Activated naive CD8-positive, alpha-beta T cell treated with anti-CD3 and anti-CD28 coated beads, Interleukin-2, amount 10 ng/mL, durations not matched to agents 7 days and 5 days (primary cell): ENCODE measurements at regions of chr19 and their contacts with region 1.

Region 1: DNA sequence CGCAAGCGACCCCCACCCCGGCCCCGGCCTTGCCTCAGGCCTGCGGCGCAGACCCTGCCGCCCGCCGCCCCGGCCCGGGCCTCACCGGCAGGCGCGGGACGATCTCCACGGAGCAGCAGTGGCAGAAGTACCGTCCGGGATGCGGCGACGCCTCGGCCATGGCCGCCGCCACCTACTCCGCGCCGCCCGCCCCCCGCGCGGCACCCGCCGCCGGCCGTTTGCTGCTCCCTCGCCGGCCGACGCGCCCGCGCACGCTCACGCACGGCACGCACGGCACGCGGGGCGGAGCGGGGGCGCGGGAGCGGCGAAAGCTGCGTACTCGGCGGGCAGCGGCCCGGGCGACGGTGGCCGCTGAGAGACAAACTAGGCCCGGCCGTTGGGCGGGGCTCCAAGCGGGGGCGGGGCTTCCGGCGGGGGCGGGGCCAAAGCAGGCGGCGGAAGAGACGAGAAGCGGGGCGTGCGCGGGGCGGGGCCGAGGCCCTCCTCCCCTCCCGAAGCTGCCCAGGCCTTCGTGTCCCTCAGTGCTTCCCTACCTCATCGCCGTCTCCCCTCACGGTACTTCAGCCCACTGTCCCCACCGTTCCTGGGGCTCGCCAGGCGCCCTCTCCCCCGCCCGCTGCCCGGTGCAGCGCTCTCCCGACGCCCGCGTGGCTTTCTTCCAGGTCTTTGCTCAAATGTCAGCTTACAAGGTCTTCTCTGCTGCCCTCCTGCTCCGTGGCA is at the start of gene RNF126:
- DNase-seq: peak; percentile 93
- ATAC-seq: peak; percentile 51
- H3K4me3 Mint-ChIP-seq: peak within 1 kb of the TSS; percentile 93
- H3K27ac Mint-ChIP-seq: peak within 1 kb of the TSS; percentile 95
- H3K4me1 Mint-ChIP-seq: peaks cover 23% of the 10 kb centered on the region
- H3K27me3 Mint-ChIP-seq: no peaks in the 10 kb centered on the region
- total RNA-seq, gene RNF126: 79.0 to 84.8 TPM

Region 2: GRCh38 chr19:633068-633785 is 29.9 kb before region 1 on chr19 and contains the start of gene POLRMT:
- POLR2A ChIA-PET with region 1: interaction called, 15 read pairs
- DNase-seq: peak; percentile 95
- ATAC-seq: peak; percentile 95
- H3K4me3 Mint-ChIP-seq: peak within 1 kb of the TSS; percentile 87
- H3K27ac Mint-ChIP-seq: peak within 1 kb of the TSS; percentile 94
- H3K4me1 Mint-ChIP-seq: peaks cover 9% of the 10 kb centered on the region
- H3K27me3 Mint-ChIP-seq: no peaks in the 10 kb centered on the region
- total RNA-seq, gene POLRMT: 63.2 to 65.1 TPM

Region 3: DNA sequence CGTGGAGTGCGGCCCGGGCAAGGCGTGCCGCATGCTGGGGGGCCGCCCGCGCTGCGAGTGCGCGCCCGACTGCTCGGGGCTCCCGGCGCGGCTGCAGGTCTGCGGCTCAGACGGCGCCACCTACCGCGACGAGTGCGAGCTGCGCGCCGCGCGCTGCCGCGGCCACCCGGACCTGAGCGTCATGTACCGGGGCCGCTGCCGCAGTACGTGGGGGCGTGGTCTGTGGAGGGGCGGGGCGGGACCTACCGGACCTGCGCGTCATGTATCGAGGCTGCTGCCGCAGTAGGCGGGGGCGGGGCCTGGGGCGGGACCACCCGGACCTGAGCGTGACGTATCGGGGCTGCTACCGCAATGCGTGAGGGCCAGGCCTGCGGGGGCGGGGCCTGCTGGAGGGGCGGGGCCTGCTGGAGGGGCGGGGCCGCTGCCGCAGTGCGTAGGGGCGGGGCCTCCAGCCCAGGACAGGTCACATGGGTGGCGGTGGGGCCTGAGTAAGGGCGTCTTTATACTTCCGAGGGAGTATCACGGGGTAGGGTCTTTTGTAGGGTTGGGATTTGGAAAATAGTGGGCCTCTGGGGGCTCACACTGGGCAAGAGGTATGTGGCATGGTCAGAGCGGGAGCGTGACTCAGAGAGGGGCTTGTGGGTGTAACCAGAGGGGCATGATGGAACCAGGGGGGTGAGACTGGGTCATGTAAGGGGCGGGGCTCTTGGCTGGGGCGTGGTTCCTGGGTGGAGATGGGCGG is 17.3 kb after region 1 on chr19:
- POLR2A ChIA-PET with region 1: interaction called, 21 read pairs
- DNase-seq: peak; percentile 98
- ATAC-seq: peak; percentile 78
- H3K4me3 Mint-ChIP-seq: peak overlapping the region; percentile 92
- H3K27ac Mint-ChIP-seq: peak overlapping the region; percentile 95
- H3K4me1 Mint-ChIP-seq: no peaks in the 10 kb centered on the region
- H3K27me3 Mint-ChIP-seq: peaks cover 11% of the 10 kb centered on the region